ENCODE measurements at regions of chr19 and their contacts with region 1.

Region 1: DNA sequence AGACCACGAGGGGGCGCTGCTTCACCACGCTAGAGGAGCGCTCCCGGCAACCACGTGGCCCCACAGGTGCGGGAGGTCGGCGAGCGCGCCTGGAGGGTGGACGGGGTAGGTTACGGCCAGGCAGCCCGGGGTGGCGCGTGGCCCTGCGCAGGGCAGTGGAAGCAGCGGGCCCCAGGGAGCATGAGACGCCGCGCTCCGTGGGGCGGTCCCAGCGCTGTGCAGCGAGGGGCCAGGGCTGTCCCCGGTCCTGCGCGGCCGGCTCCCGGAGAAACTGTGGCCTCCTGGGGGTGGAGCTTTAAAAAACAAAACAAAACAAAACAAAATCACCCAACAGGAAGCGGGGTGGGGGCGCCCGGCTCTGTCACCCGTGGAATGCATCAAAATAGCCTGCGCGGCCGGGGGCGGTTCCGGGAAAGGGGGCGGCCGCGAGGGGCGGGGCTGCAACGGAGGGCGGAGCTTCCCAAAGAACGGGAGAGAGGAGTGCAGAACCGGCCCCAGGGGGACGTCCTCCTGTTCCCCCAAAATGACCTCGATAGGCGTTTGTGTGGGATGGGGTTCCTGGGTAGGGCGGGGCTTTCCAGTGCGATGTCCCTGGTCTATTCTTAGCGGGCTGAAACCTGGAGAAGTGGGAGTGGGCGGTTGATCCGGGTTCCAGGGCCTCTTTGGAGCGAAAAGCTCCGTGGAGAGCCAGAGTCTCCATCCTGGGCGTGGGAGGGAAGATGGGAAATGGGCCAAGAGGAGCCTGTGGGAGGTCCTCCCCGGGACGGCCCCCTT is 27.3 kb downstream of the NUMBL start:
- DNase-seq: peak; percentile 61 to 93
- H3K4me3 ChIP-seq: peak overlapping the region; percentile 94
- H3K27ac ChIP-seq: peak overlapping the region; percentile 60
- H3K4me1 ChIP-seq: peaks cover 34% of the 10 kb centered on the region
- H3K27me3 ChIP-seq: no peaks in the 10 kb centered on the region
- CTCF ChIP-seq: peak; percentile 95; the same call in 1 of the 2 replicates

Region 2: DNA sequence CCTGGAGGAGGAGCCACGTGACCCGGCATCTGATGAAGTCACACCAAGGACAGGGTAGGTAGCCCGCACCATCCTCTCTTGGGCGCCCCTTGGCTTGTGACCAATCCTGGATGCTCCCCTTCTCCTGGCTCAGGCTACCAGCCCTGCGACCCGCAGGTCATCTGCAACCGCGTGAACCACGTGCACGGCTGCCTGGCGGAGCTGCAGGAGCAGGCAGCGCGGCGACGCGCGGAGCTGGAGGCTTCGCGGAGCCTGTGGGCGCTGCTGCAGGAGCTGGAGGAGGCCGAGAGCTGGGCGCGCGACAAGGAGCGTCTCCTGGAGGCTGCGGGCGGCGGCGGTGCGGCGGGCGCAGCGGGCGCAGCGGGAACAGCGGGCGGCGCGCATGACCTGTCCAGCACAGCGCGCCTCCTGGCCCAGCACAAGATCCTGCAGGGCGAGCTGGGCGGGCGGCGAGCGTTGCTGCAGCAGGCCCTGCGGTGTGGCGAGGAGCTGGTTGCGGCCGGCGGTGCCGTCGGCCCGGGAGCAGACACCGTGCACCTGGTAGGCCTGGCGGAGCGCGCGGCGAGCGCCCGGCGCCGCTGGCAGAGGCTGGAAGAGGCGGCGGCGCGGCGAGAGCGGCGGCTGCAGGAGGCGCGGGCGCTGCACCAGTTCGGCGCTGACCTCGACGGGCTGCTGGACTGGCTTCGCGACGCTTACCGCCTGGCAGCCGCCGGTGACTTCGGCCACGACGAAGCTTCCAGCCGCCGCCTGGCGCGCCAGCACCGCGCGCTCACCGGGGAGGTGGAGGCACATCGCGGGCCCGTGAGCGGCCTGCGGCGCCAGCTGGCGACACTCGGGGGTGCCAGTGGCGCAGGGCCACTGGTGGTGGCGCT is 150.4 kb before region 1 on chr19:
- CTCF ChIA-PET with region 1: no interaction called
- POLR2A ChIA-PET with region 1: no interaction called
- intact Hi-C with region 1: no loop called
- DNase-seq: no peak
- H3K4me3 ChIP-seq: no peak overlapping the region
- H3K27ac ChIP-seq: no peak overlapping the region
- H3K4me1 ChIP-seq: no peaks in the 10 kb centered on the region
- H3K27me3 ChIP-seq: peaks cover 22% of the 10 kb centered on the region
- CTCF ChIP-seq: no peak

Region 3: DNA sequence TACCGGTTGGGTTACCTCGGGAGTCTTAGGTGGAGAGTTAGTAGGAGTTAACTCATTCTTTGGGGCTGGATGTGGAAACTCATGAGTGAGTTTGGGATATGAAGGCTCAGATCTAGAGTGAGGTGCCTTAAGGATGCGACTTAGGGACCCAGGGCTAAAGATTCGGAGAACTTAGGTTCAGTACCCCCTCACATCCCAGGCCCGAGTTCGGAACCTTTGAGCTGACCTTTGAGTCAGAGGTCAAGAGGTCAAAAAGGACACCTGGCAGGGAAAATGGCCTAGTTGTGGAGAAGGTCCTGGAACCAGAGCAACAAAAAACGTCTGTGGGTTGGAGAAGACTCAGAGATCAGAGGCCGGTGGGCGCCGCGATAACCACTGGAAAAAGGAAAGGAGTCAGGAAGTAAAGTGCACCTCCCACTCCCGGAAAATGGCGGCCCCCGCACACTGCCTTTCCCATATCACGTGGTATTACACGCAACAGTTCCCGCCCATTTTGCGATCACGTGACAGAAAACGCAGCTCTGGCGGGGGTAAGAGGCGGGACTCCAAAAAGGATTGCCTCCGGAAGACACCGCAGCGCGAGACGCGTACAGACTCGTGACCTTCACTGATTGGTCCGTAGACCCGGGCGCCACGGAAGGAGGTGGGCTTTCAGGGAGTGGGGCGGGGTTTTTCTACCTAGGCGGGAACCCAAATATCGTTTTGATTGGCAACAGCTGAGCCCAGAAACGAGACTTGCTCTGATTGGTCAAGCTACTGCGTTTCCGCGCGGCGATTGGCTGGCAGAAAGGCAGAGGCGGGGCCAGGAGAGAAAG is 87.2 kb after region 1 on chr19 and contains the start of gene ACTMAP:
- CTCF ChIA-PET with region 1: interaction called, 4 read pairs
- POLR2A ChIA-PET with region 1: interaction called, 3 read pairs
- intact Hi-C with region 1: loop called (anchors 1 kb)
- DNase-seq: peak; percentile 98 to 99
- H3K4me3 ChIP-seq: peak within 1 kb of the TSS; percentile 95
- H3K27ac ChIP-seq: peak within 1 kb of the TSS; percentile 91
- H3K4me1 ChIP-seq: peaks cover 44% of the 10 kb centered on the region
- H3K27me3 ChIP-seq: no peaks in the 10 kb centered on the region
- CTCF ChIP-seq: no peak
- total RNA-seq, gene ACTMAP: 35.9 and 39.3 TPM in 2 replicates

Region 4: DNA sequence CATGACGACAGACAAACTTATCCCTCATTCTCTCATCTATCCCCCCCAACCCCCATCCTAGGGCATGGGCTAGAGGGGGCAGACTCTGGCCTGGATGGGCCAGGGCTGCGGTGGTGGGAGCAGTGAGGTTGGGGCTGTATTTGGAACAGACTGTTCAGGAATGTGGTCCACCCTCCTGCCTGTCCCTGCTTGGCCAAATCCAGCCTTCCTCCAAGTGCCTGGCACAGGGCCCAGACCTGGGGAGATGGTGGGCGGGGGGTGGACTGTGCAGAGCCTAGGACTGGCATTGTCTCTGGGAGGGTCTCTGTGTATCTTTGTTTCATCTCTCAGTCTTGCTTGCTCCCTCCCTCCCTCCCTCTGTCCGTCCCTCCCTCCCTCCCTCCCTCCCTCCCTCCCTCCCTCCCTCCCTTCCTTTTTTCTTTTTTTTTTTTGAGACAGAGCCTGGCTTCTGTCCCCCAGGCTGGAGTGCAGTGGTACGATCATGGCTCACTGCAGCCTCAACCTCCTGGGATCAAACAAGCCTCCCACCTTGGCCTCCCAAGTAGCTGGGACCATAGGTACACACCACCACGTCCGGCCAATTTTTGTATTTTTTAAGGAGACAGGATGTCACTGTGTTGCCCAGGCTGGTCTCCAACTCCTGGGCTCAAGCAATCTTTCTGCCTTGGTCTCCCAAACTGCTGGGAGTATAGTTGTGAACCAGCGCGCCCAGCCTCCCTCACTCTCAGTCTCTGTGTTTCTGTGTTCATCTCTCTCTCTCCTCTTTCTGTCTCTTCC is 150.3 kb after region 1 on chr19:
- CTCF ChIA-PET with region 1: interaction called, 4 read pairs
- POLR2A ChIA-PET with region 1: no interaction called
- intact Hi-C with region 1: loop called (anchors 2 kb)
- DNase-seq: peak in 1 of 2 experiments; percentile 48
- H3K4me3 ChIP-seq: no peak overlapping the region
- H3K27ac ChIP-seq: no peak overlapping the region
- H3K4me1 ChIP-seq: no peaks in the 10 kb centered on the region
- H3K27me3 ChIP-seq: no peaks in the 10 kb centered on the region
- CTCF ChIP-seq: no peak

Region 5: DNA sequence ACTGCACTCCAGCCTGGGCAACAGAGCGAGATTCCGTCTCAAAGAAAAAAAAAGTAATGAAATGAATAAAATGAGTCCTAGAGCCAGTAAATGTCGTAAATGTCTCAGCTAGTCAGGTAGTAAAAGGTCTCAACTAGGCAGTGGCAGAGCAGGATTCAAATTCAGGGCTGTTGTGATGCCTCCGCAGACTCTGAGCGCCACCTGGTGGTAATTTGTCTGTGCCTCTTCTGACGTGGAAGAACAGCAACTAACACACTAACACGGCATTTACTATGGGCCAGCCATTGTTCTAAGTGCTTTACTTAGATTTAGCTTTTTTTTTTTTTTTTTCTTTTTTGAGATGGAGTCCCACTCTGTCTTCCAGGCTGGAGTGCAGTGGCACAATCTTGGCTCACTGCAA is 481.3 kb after region 1 on chr19:
- CTCF ChIA-PET with region 1: no interaction called
- POLR2A ChIA-PET with region 1: no interaction called
- intact Hi-C with region 1: loop called (anchors 1 kb)
- DNase-seq: peak; percentile 64 to 75
- H3K4me3 ChIP-seq: no peak overlapping the region
- H3K27ac ChIP-seq: no peak overlapping the region
- H3K4me1 ChIP-seq: no peaks in the 10 kb centered on the region
- H3K27me3 ChIP-seq: no peaks in the 10 kb centered on the region
- CTCF ChIP-seq: peak; percentile 90

Region 6: GRCh38 chr19:41310033-41310758 is 647.1 kb after region 1 on chr19 and contains the start of gene CCDC97:
- CTCF ChIA-PET with region 1: no interaction called
- POLR2A ChIA-PET with region 1: no interaction called
- intact Hi-C with region 1: loop called (anchors 2 kb)
- DNase-seq: peak; percentile 67 to 84
- H3K4me3 ChIP-seq: peak within 1 kb of the TSS; percentile 88
- H3K27ac ChIP-seq: peak within 1 kb of the TSS; percentile 87
- H3K4me1 ChIP-seq: peaks cover 16% of the 10 kb centered on the region
- H3K27me3 ChIP-seq: no peaks in the 10 kb centered on the region
- CTCF ChIP-seq: no peak
- total RNA-seq, gene CCDC97: 24.1 and 26.4 TPM in 2 replicates

Measured in PC-9 (cell line).